ENCODE measurements at regions of chr2 and their contacts with region 1.

Region 1: GRCh38 chr2:106104332-106105062 is 89.6 kb downstream of the UXS1 start:
- DNase-seq: peak in 1 of 3 donors; percentile 70
- ATAC-seq: peak; percentile 52
- H3K4me3 ChIP-seq: no peak overlapping the region
- H3K27ac ChIP-seq: no peak overlapping the region
- H3K4me1 ChIP-seq: no peaks in the 10 kb centered on the region
- H3K27me3 ChIP-seq: no peaks in the 10 kb centered on the region

Region 2: DNA sequence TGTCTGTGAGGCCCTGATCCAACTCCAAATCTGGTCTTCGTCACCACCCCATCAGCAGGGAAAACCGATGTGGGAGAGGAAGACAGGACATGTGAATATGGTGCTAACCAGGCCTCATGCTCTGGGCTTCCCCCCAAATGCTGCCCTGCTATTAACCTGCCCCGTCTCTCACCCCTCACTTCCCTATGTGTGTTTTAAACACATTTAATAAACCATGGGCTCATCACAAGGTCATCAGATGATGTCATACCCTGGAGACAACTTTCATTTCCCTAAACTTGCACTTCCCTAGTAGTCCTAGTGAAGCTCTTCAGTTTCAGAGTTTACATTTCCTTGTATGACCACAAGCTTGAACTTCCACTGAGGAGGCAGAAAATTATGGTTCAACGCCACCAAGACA is 432.6 kb after region 1 on chr2:
- intact Hi-C with region 1: loop called in 2 of 4 experiments (anchors 5 to 10 kb)
- DNase-seq: no peak
- ATAC-seq: peak; percentile 50 to 67
- H3K4me3 ChIP-seq: no peak overlapping the region
- H3K27ac ChIP-seq: no peak overlapping the region
- H3K4me1 ChIP-seq: no peaks in the 10 kb centered on the region
- H3K27me3 ChIP-seq: no peaks in the 10 kb centered on the region

Region 3: DNA sequence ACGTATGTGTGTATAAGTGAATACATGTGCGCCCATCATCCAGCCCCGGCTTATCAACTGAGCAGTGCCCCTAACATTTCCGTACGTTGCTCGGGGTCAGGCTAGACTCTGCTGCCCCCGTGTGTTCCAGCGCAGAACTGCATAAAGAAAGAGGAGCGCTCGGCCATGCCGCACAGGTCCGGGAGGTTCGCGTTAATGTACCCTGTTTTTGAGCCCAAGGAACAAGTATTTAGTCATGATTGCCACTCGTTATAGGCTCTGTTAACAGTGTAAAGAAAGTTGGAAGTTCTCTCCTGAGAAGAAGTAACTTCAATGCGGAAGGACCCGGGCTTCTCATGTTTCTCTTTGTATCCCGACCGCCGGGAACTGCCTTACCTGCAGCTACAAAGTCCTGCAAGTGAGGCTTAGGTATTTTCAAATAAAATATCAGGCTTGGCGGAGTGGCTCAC is 438.3 kb after region 1 on chr2:
- intact Hi-C with region 1: loop called in 2 of 4 experiments (anchors 5 to 10 kb)
- DNase-seq: peak; percentile 57 to 86 (median 81)
- ATAC-seq: peak; percentile 74 to 87
- H3K4me3 ChIP-seq: peak overlapping the region; percentile 35
- H3K27ac ChIP-seq: no peak overlapping the region
- H3K4me1 ChIP-seq: no peaks in the 10 kb centered on the region
- H3K27me3 ChIP-seq: no peaks in the 10 kb centered on the region

Region 4: GRCh38 chr2:106582148-106583143 is 477.9 kb after region 1 on chr2:
- intact Hi-C with region 1: loop called (anchors 2 to 10 kb)
- DNase-seq: peak; percentile 68 to 84 (median 77)
- ATAC-seq: peak; percentile 87 to 92
- H3K4me3 ChIP-seq: peak overlapping the region; percentile 39
- H3K27ac ChIP-seq: no peak overlapping the region
- H3K4me1 ChIP-seq: no peaks in the 10 kb centered on the region
- H3K27me3 ChIP-seq: no peaks in the 10 kb centered on the region